H1 (cell line): ENCODE measurements at regions of chr6 and their contacts with region 1.

Region 1: GRCh38 chr6:37381579-37381978 is 27.8 kb downstream of the RNF8 start:
- DNase-seq: peak; percentile 13 to 46
- H3K4me3 ChIP-seq: no peak overlapping the region
- H3K27ac ChIP-seq: no peak overlapping the region
- H3K4me1 ChIP-seq: no peaks in the 10 kb centered on the region
- H3K27me3 ChIP-seq: no peaks in the 10 kb centered on the region
- CTCF ChIP-seq: peak; percentile 60 to 78 (median 65)
- EP300 ChIP-seq: no peak
- POLR2A ChIP-seq: no peak
- RAD21 ChIP-seq: peak; percentile 67 to 77

Region 2: DNA sequence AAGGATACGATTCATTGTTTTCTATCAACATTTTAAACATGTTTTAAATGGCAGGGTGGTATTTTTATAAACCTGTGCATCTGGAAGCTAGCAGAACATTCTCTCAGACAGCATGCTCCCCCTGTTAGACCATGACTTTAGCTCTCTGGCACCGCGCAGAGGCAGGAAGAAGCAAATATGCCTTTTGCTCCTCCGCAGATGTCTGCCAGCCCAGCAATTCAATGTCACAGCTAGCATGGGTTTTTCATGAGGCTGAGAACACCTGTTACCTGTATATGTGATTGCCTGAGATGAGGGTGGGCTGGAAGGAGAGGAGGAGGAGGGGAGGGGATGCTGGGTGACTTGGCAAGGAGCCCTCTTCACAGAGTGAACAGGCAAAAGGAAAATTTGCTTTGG is 402.2 kb before region 1 on chr6:
- CTCF ChIA-PET with region 1: no interaction called
- POLR2A ChIA-PET with region 1: no interaction called
- DNase-seq: no peak
- H3K4me3 ChIP-seq: no peak overlapping the region
- H3K27ac ChIP-seq: no peak overlapping the region
- H3K4me1 ChIP-seq: peaks cover 9 to 14% (median 11%) of the 10 kb centered on the region in 4 experiments
- H3K27me3 ChIP-seq: no peaks in the 10 kb centered on the region
- CTCF ChIP-seq: peak; percentile 22 to 39 (median 28)
- EP300 ChIP-seq: no peak
- POLR2A ChIP-seq: no peak
- RAD21 ChIP-seq: peak; percentile 18 to 40; a peak in 2 of 4 replicates

Region 3: GRCh38 chr6:37365762-37366161 is 15.8 kb before region 1 on chr6:
- CTCF ChIA-PET with region 1: interaction called, 13 read pairs
- POLR2A ChIA-PET with region 1: interaction called, 3 read pairs
- DNase-seq: no peak
- H3K4me3 ChIP-seq: no peak overlapping the region
- H3K27ac ChIP-seq: no peak overlapping the region
- H3K4me1 ChIP-seq: no peaks in the 10 kb centered on the region
- H3K27me3 ChIP-seq: no peaks in the 10 kb centered on the region
- CTCF ChIP-seq: no peak
- EP300 ChIP-seq: no peak
- POLR2A ChIP-seq: no peak
- RAD21 ChIP-seq: 0 out of 4 replicates have a peak, but pooled peaks of 1 of the 2 experiments have one; percentile 5

Region 4: GRCh38 chr6:37396476-37397180 is 15.0 kb after region 1 on chr6:
- CTCF ChIA-PET with region 1: interaction called, 43 read pairs
- POLR2A ChIA-PET with region 1: interaction called, 3 read pairs
- DNase-seq: no peak
- H3K4me3 ChIP-seq: no peak overlapping the region
- H3K27ac ChIP-seq: no peak overlapping the region
- H3K4me1 ChIP-seq: no peaks in the 10 kb centered on the region
- H3K27me3 ChIP-seq: no peaks in the 10 kb centered on the region
- CTCF ChIP-seq: no peak
- EP300 ChIP-seq: no peak
- POLR2A ChIP-seq: no peak
- RAD21 ChIP-seq: no peak

Region 5: GRCh38 chr6:37432916-37433656 is 51.5 kb after region 1 on chr6 and contains the start of gene CMTR1:
- CTCF ChIA-PET with region 1: interaction called, 10 read pairs
- POLR2A ChIA-PET with region 1: no interaction called
- DNase-seq: peak; percentile 59 to 97
- H3K4me3 ChIP-seq: peak within 1 kb of the TSS; percentile 80 to 92 (median 86)
- H3K27ac ChIP-seq: peak within 1 kb of the TSS; percentile 80; the same call in 1 of the 2 replicates
- H3K4me1 ChIP-seq: peaks cover 0 to 12% (median 3%) of the 10 kb centered on the region in 4 experiments; a peak in 4 of 7 replicates
- H3K27me3 ChIP-seq: no peaks in the 10 kb centered on the region
- CTCF ChIP-seq: no peak
- EP300 ChIP-seq: no peak; a peak in 1 of 3 replicates
- POLR2A ChIP-seq: peak; percentile 60 to 92
- RAD21 ChIP-seq: 0 out of 4 replicates have a peak, but pooled peaks of 1 of the 2 experiments have one; percentile 0
- total RNA-seq, gene CMTR1: 33.1 and 34.3 TPM in 2 replicates